ENCODE measurements at regions of chr17 and their contacts with region 1.

Region 1: DNA sequence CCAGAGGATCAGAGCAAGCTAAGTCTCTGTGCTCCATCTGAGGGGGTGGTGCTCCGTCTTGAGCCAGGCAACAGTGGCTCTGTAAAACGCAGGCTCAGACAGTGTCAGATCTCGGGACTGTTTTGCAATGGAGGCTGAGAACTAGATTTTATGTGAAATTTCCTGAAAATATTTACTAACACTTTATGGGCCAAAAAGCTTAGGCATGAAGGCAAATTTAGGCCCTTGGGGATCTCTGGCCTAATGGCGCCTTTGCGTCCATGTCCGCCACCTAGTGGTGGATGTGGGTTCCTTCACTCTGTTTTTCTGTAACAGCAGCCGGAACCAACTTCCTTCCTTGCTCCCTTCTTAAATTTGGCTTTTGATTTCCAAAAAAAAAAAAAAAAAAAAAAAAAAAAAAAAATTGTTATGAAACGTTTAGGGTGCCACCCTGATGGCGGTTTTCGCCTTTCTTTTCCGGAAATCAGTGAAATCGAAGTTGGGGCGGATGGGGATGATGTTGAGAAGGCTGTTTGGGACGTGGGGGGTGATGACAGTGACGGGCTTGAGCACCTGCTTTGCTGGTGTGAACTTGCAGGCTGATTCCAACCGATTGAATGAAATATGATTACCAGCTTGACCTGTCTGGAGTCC is 14.0 kb upstream of the ELAC2 start:
- DNase-seq: peak; percentile 52 to 71
- ATAC-seq: peak; percentile 67 to 87; a peak in 4 of 6 replicates
- H3K4me3 ChIP-seq: no peak overlapping the region
- H3K27ac ChIP-seq: no peak overlapping the region
- H3K4me1 ChIP-seq: no peaks in the 10 kb centered on the region
- CTCF ChIP-seq: peak; percentile 69
- EP300 ChIP-seq: no peak
- POLR2A ChIP-seq: no peak
- RAD21 ChIP-seq: peak in 1 of 2 experiments; percentile 26; a peak in 1 of 5 replicates

Region 2: DNA sequence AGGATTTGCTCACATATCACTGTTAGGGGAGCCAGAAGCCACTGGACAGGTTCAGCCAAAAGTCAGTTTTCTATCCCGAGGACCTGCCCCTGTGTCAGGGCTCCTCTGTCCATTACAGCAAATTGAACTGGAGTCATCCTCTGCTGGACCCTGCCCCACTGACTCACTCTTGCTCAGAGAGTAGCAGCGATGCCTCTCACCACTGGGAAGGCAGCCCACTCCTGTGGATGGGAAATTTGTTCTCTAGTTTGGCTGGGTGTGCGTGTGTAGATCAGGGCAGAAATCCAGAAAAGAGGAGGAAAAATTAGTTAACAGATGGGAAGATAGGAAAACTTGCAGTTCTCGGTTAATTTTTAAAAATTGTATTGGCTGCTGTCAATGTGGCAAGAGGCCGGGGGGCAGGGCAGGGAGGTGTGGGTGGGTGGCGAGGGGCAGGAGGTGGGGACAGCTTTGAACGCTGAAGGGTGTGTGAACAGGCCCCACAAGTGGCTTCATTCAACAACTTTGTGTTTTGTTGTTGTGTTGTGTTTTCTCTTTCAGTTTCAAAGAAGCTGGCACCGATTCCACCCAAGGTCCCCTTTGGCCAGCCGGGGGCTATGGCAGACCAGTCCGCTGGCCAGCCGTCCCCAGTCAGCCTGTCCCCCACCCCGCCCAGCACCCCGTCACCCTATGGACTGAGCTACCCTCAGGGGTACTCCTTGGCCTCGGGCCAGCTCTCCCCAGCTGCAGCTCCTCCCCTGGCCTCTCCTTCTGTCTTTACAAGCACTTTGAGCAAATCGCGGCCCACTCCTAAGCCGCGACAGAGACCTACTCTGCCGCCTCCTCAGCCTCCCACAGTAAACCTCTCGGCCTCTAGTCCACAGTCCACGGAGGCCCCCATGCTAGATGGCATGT is 47.6 kb before region 1 on chr17:
- CTCF ChIA-PET with region 1: interaction called, 16 read pairs
- POLR2A ChIA-PET with region 1: no interaction called
- DNase-seq: no peak
- ATAC-seq: peak in 1 of 2 experiments; percentile 55; a peak in 3 of 6 replicates
- H3K4me3 ChIP-seq: no peak overlapping the region
- H3K27ac ChIP-seq: no peak overlapping the region
- H3K4me1 ChIP-seq: no peaks in the 10 kb centered on the region
- CTCF ChIP-seq: no peak
- EP300 ChIP-seq: no peak
- POLR2A ChIP-seq: no peak
- RAD21 ChIP-seq: no peak

Region 3: DNA sequence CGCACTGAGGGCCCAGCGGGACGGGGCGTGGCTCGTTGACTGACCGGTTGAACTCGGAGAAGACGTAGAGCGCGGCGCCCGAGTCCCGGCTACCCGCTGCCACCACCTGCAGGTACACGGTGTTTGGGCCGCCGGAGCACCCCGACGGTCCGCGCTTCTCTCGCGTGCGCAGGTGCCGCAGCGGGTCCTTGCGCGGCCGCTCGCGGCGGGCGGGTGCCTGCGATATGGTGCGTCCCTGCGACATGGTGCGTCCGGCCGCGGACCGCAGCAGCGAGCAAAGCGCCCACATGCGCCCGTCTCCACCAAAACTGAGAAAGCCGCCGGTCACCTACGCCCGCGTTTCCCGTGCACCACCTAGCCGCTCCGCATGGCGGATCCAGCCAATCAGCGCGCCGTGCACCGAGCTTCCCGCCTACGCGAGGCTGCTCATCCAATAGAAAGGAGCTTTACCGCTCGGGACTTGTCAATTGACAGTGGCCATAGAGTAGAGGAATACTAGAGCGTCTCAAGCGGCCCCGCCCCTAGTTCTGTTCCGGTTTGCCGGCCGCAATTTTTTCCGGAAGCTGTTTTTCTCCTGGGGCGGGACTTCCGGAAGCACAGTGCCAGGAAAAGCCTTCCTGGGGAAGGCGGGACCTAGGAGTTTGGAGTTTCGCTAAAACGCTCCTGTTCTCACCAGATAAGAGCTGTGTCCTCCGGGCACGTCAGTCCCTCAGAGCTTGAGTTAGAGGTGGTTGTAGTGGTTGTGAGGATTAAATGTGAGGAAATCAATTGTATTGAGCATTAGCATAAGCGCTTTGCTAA is 14.0 kb before region 1 on chr17 and contains the start of gene ELAC2:
- CTCF ChIA-PET with region 1: interaction called, 111 read pairs
- POLR2A ChIA-PET with region 1: interaction called, 7 read pairs
- DNase-seq: peak; percentile 98 to 99
- ATAC-seq: peak; percentile 96 to 99
- H3K4me3 ChIP-seq: peak within 1 kb of the TSS; percentile 80
- H3K27ac ChIP-seq: peak within 1 kb of the TSS; percentile 85 to 91
- H3K4me1 ChIP-seq: peaks cover 13% of the 10 kb centered on the region
- CTCF ChIP-seq: no peak
- EP300 ChIP-seq: no peak
- POLR2A ChIP-seq: peak; percentile 90
- RAD21 ChIP-seq: no peak
- polyA plus RNA-seq, gene ELAC2: 97.9 and 103 TPM in 2 replicates

Region 4: DNA sequence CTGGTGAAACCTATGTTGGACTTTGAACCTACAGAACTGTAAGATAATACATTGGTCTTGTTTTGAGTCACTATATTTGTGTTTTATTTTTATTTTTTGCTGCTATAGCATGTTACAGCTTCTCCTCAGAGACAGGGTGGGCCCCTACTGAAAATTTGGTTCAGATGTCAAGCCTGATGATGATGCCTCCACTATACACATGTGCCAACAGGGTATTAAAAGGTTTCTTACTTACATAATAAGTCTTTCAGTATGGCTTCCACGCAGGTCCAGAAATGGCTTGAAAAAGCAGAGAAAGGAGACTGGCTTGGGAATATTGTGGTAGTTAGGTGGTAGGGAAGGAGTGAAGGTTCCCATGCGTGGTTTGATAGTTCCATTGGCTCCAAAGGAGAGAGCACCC is 38.9 kb after region 1 on chr17:
- CTCF ChIA-PET with region 1: interaction called, 13 read pairs
- POLR2A ChIA-PET with region 1: no interaction called
- DNase-seq: no peak
- ATAC-seq: no peak
- H3K4me3 ChIP-seq: no peak overlapping the region
- H3K27ac ChIP-seq: no peak overlapping the region
- H3K4me1 ChIP-seq: no peaks in the 10 kb centered on the region
- CTCF ChIP-seq: no peak
- EP300 ChIP-seq: no peak
- POLR2A ChIP-seq: no peak
- RAD21 ChIP-seq: no peak

Region 5: GRCh38 chr17:13099089-13099735 is 67.4 kb after region 1 on chr17:
- CTCF ChIA-PET with region 1: no interaction called
- POLR2A ChIA-PET with region 1: no interaction called
- DNase-seq: no peak
- ATAC-seq: no peak
- H3K4me3 ChIP-seq: no peak overlapping the region
- H3K27ac ChIP-seq: no peak overlapping the region
- H3K4me1 ChIP-seq: no peaks in the 10 kb centered on the region
- CTCF ChIP-seq: no peak
- EP300 ChIP-seq: no peak
- POLR2A ChIP-seq: no peak
- RAD21 ChIP-seq: no peak

Region 6: DNA sequence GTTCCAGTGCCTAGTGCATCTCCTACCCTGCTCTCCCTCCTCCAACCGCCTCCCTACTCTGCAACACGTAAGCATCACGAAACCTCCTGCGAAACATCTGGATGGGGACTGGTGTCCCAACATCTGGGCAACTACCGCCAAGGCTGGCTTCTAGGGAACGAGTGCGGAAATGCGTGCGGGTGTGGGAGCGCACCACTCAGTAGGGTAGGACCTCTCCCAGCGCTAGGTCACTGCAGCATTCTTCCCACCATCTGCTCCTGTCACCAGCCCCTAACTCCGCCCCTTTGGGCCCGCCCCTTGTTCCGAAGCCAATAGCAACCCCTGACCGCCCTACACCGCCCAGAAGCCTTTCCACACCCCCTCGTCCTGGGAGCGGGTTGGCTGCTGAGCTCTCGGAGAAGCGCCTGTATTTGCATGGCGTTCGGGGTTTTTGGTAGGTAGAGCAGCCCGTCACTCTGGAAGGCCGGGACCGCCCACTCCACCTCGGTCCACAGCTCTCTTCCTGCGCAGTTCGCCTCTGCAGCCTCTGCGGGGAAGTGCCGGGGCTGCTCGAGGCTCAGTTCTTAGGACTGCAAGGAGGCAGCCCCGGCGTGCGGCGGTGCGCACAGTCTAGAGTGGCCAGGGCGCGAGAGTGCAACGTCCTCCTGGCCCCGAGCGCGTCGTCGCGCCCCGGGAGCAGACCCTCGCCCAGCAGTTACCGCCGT is 1268.9 kb after region 1 on chr17 and contains the start of gene HS3ST3B1:
- CTCF ChIA-PET with region 1: interaction called, 14 read pairs
- POLR2A ChIA-PET with region 1: no interaction called
- DNase-seq: peak; percentile 98 to 99
- ATAC-seq: peak; percentile 80 to 92
- H3K4me3 ChIP-seq: peak within 1 kb of the TSS; percentile 53
- H3K27ac ChIP-seq: peak within 1 kb of the TSS; percentile 36 to 67; a peak in 5 of 6 replicates
- H3K4me1 ChIP-seq: peaks cover 29% of the 10 kb centered on the region
- CTCF ChIP-seq: no peak
- EP300 ChIP-seq: no peak
- POLR2A ChIP-seq: peak; percentile 68
- RAD21 ChIP-seq: peak in 1 of 2 experiments; percentile 26; a peak in 2 of 5 replicates
- polyA plus RNA-seq, gene HS3ST3B1: 0.44 and 0.67 TPM in 2 replicates